ENCODE measurements at regions of chr6 and their contacts with region 1.

Region 1: GRCh38 chr6:169723200-169723909 is 945 bp downstream of the PHF10 start:
- DNase-seq: peak; percentile 72
- H3K4me3 ChIP-seq: peak overlapping the region; percentile 25 to 95 (median 71)
- H3K27ac ChIP-seq: peak overlapping the region; percentile 77
- H3K4me1 ChIP-seq: peaks cover 30% of the 10 kb centered on the region
- H3K27me3 ChIP-seq: no peaks in the 10 kb centered on the region
- CTCF ChIP-seq: no peak
- POLR2A ChIP-seq: no peak

Region 2: GRCh38 chr6:168956884-168957730 is 766.2 kb before region 1 on chr6:
- CTCF ChIA-PET with region 1: no interaction called
- POLR2A ChIA-PET with region 1: no interaction called
- dilution Hi-C with region 1: no loop called
- intact Hi-C with region 1: loop called (anchors 10 kb)
- DNase-seq: peak; percentile 17
- H3K4me3 ChIP-seq: no peak overlapping the region
- H3K27ac ChIP-seq: no peak overlapping the region
- H3K4me1 ChIP-seq: no peaks in the 10 kb centered on the region
- H3K27me3 ChIP-seq: no peaks in the 10 kb centered on the region
- CTCF ChIP-seq: peak; percentile 60 to 65
- POLR2A ChIP-seq: no peak

Region 3: GRCh38 chr6:169669889-169670288 is 53.5 kb before region 1 on chr6:
- CTCF ChIA-PET with region 1: no interaction called
- POLR2A ChIA-PET with region 1: no interaction called
- dilution Hi-C with region 1: no loop called
- intact Hi-C with region 1: loop called (anchors 1 kb)
- DNase-seq: peak; percentile 98
- H3K4me3 ChIP-seq: no peak overlapping the region
- H3K27ac ChIP-seq: peak overlapping the region; percentile 98
- H3K4me1 ChIP-seq: peaks cover 26% of the 10 kb centered on the region
- H3K27me3 ChIP-seq: no peaks in the 10 kb centered on the region
- CTCF ChIP-seq: no peak
- POLR2A ChIP-seq: no peak

Region 4: DNA sequence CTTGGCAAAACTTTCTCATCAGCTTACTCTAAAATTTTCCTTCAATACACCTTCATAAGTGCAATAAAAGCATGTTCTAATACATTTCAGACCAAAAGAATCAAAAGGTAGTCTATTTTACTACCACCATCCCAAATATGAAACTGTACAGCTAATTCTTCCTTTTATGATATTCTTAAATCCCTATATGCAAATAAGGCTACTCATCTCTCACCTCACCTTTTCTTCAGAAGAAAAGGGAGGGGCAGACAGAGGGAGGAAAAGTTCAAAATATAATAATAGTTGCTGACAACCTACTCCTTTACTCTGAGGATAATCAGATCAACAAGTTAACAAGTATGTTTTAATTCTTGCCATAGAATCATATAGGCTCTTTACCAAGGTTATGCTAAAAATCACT is 14.1 kb before region 1 on chr6:
- CTCF ChIA-PET with region 1: interaction called, 18 read pairs
- POLR2A ChIA-PET with region 1: no interaction called
- dilution Hi-C with region 1: no loop called
- intact Hi-C with region 1: no loop called
- DNase-seq: no peak
- H3K4me3 ChIP-seq: no peak overlapping the region
- H3K27ac ChIP-seq: no peak overlapping the region
- H3K4me1 ChIP-seq: peaks cover 5% of the 10 kb centered on the region
- H3K27me3 ChIP-seq: no peaks in the 10 kb centered on the region
- CTCF ChIP-seq: no peak
- POLR2A ChIP-seq: no peak

Region 5: DNA sequence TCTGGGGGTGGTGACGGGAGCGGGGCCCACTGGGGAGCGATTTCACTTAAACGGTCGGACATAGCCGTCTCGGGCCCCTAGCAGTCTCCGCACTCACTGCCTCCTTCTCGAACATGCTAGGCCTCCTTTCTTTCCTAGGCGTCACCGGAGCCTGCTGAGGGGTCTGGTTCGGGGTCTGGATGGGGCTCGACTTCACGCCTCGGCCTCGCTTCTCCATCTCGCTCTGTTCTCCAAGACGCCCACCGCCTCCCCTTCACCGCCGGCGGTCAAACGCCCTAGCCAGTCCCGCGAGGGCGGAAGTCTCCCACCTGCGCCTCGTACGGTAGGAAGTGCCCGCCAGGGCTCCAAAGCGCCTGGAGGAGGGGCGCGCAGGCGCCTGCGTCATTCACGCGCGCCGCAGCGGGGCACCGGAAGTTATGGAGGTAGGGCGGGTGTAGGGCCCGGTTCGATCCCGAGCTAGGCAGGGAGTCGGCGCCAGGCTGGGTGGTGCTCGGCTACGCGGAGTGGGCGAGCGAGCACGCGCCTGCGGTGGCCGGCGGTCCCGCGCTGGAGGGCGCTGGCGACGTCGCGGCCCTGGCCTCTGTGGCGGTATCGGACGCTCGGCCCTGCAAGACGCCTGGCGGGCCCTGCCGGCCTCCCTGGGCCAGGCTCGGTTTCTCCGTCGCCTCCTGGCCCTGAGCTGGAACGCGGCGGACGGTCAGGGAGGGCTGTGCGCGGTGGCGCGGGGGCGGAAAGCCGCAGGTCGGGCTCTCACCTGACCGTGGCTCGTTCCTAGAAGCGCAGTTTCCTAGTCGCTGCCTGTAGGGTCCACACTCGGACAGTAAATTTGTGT is 28.1 kb after region 1 on chr6 and contains the starts of genes DYNLT2 and ERMARD:
- CTCF ChIA-PET with region 1: interaction called, 4 read pairs
- POLR2A ChIA-PET with region 1: no interaction called
- dilution Hi-C with region 1: no loop called
- intact Hi-C with region 1: loop called (anchors 1 kb)
- DNase-seq: peak; percentile 96
- H3K4me3 ChIP-seq: peak within 1 kb of the TSS; percentile 62 to 95 (median 92)
- H3K27ac ChIP-seq: peak within 1 kb of the TSS; percentile 83
- H3K4me1 ChIP-seq: peaks cover 14% of the 10 kb centered on the region
- H3K27me3 ChIP-seq: no peaks in the 10 kb centered on the region
- CTCF ChIP-seq: peak in 1 of 2 donors; percentile 23
- POLR2A ChIP-seq: peak; percentile 87
- total RNA-seq, gene DYNLT2: 0.88 and 1.5 TPM in 2 replicates
- total RNA-seq, gene ERMARD: 18.8 and 23.8 TPM in 2 replicates

Region 6: GRCh38 chr6:169838346-169839028 is 115.1 kb after region 1 on chr6:
- CTCF ChIA-PET with region 1: no interaction called
- POLR2A ChIA-PET with region 1: no interaction called
- dilution Hi-C with region 1: no loop called
- intact Hi-C with region 1: no loop called
- DNase-seq: no peak
- H3K4me3 ChIP-seq: no peak overlapping the region
- H3K27ac ChIP-seq: no peak overlapping the region
- H3K4me1 ChIP-seq: no peaks in the 10 kb centered on the region
- H3K27me3 ChIP-seq: peaks cover 3 to 6% of the 10 kb centered on the region in 2 experiments
- CTCF ChIP-seq: no peak
- POLR2A ChIP-seq: no peak

Region 7: DNA sequence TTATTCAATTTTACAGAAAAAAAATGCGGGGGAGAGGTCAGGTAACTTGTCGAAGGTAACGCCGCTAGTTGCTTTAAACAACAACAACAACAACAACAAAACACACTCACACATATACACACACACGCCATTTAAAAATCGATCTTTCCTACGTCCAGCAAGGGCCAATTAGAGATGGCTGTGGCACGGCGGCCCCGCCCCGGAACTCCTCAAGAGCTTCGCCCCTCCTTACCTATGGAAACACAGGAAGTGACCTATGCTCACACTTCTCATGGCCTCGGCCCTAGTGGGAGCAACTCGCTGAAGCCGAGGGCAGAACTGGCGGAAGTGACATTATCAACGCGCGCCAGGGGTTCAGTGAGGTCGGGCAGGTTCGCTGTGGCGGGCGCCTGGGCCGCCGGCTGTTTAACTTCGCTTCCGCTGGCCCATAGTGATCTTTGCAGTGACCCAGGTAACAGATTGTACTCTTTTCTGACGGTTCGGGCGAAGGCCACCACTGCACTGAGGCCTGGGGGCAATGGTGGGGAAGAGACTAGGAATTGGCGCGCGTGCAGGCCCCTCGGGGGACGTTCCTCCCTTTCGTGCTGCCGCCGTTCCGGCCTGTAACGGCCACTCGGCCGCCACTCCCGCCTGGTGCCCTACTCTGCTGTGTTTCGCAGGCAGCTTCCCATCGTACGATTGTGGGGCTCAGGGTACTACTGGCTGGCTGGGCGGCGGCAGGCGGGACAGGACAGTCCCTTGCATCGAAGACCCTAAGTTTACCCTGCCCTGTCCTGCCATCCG is 830.8 kb after region 1 on chr6 and contains the start of gene TBP:
- CTCF ChIA-PET with region 1: no interaction called
- POLR2A ChIA-PET with region 1: no interaction called
- dilution Hi-C with region 1: no loop called
- intact Hi-C with region 1: loop called (anchors 1 kb)
- DNase-seq: peak; percentile 97
- H3K4me3 ChIP-seq: peak within 1 kb of the TSS; percentile 76 to 89 (median 81)
- H3K27ac ChIP-seq: peak within 1 kb of the TSS; percentile 84
- H3K4me1 ChIP-seq: peaks cover 22% of the 10 kb centered on the region
- H3K27me3 ChIP-seq: no peaks in the 10 kb centered on the region
- CTCF ChIP-seq: no peak
- POLR2A ChIP-seq: peak; percentile 86
- total RNA-seq, gene TBP: 15.3 and 17.7 TPM in 2 replicates

Measured in endothelial cell of umbilical vein (primary cell).